ENCODE measurements at regions of chr20 and their contacts with region 1.

Region 1: GRCh38 chr20:57596998-57597939 is 23.0 kb downstream of the ZBP1 start:
- DNase-seq: peak; percentile 53 to 75
- ATAC-seq: peak; percentile 67 to 91
- H3K4me3 ChIP-seq: peak overlapping the region; percentile 34
- H3K27ac ChIP-seq: peak overlapping the region; percentile 56 to 83; a peak in 4 of 6 replicates
- H3K4me1 ChIP-seq: peaks cover 15% of the 10 kb centered on the region; the same call in 2 of the 3 replicates
- CTCF ChIP-seq: peak; percentile 97
- EP300 ChIP-seq: no peak
- POLR2A ChIP-seq: no peak
- RAD21 ChIP-seq: peak; percentile 93 to 99

Region 2: GRCh38 chr20:57514273-57514751 is 83.0 kb before region 1 on chr20:
- CTCF ChIA-PET with region 1: interaction called, 388 read pairs
- POLR2A ChIA-PET with region 1: no interaction called
- DNase-seq: peak; percentile 68 to 73
- ATAC-seq: peak; percentile 74 to 88; a peak in 5 of 6 replicates
- H3K4me3 ChIP-seq: no peak overlapping the region
- H3K27ac ChIP-seq: no peak overlapping the region
- H3K4me1 ChIP-seq: no peaks in the 10 kb centered on the region
- CTCF ChIP-seq: peak; percentile 90
- EP300 ChIP-seq: no peak
- POLR2A ChIP-seq: no peak
- RAD21 ChIP-seq: peak; percentile 97 to 98

Region 3: DNA sequence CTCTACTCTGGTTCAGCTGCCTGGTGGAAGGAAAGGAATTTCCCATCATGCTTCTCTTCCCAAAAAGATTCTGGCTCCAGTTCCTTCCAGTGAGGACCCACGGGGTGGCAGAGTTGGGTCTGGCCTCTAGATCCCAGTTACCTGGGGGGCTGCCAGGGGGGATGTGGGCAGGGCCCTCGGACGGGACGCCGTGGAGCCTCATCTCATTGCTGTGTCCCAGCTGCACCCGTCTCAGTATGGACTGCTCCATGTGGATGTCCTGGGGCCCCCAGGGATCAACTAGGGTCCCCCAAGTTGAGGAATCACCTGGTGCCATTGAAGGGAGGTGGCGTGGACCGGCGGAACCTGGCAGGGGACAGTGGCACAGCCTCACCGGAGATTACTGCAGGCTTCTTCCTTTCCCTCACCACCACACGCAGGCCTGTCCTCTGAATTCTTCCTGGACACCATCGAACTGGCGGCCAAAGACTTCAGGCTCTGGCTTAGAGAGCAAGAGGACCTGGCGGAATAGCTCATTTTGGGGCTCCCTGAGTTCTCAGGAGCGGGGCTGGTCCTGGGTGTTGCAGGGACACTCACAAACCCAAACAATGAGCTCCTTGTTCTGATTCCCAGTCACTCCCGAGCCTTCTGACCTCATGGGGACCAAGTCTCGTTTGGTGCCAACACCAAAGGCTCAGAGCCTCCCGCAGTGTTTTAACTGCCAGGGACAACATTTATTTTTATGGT is 14.5 kb after region 1 on chr20:
- CTCF ChIA-PET with region 1: interaction called, 32 read pairs
- POLR2A ChIA-PET with region 1: no interaction called
- DNase-seq: no peak
- ATAC-seq: no peak
- H3K4me3 ChIP-seq: no peak overlapping the region
- H3K27ac ChIP-seq: no peak overlapping the region
- H3K4me1 ChIP-seq: no peaks in the 10 kb centered on the region
- CTCF ChIP-seq: no peak
- EP300 ChIP-seq: no peak
- POLR2A ChIP-seq: no peak
- RAD21 ChIP-seq: no peak

Region 4: GRCh38 chr20:58179432-58180099 is 582.3 kb after region 1 on chr20:
- CTCF ChIA-PET with region 1: interaction called, 11 read pairs
- POLR2A ChIA-PET with region 1: no interaction called
- DNase-seq: peak; percentile 48
- ATAC-seq: peak; percentile 89 to 95
- H3K4me3 ChIP-seq: peak overlapping the region; percentile 42
- H3K27ac ChIP-seq: peak overlapping the region; percentile 78 to 94
- H3K4me1 ChIP-seq: peaks cover 13% of the 10 kb centered on the region
- CTCF ChIP-seq: peak; percentile 97
- EP300 ChIP-seq: no peak
- POLR2A ChIP-seq: no peak
- RAD21 ChIP-seq: peak; percentile 91 to 99

Region 5: GRCh38 chr20:58202044-58202443 is 604.8 kb after region 1 on chr20:
- CTCF ChIA-PET with region 1: interaction called, 324 read pairs
- POLR2A ChIA-PET with region 1: no interaction called
- DNase-seq: no peak
- ATAC-seq: no peak
- H3K4me3 ChIP-seq: no peak overlapping the region
- H3K27ac ChIP-seq: no peak overlapping the region
- H3K4me1 ChIP-seq: no peaks in the 10 kb centered on the region
- CTCF ChIP-seq: no peak
- EP300 ChIP-seq: no peak
- POLR2A ChIP-seq: no peak
- RAD21 ChIP-seq: no peak

Measured in A549 (cell line).